ENCODE measurements at regions of chr20 and their contacts with region 1.

Region 1: DNA sequence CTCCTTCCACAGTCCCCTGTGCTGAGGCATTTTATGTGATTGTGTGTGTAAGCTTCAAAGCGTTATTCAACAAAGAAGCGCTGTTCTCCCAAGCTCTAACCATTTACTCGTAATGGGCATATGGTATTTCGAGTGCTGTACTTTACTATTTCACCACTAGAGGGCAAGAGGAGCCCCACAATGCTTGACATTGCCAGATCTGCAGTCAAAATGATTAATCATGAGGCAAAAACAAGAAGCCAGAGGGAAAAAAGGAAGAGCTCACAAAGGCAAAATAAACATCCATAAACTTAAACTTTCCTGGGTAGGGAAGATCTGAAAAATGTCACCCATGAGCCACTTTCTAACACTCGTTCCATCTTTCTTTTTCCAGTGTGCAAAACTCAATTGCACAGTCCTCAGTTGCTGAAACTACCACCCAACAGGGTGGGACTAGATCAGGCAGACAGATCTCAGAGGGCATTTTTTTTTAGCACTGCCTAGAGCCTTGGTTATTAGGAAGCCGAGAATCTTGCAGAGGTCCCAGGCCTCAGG is 215.0 kb upstream of the PLCB4 start:
- DNase-seq: peak; percentile 2
- ATAC-seq: peak; percentile 58
- H3K4me3 Mint-ChIP-seq: no peak overlapping the region
- H3K27ac Mint-ChIP-seq: no peak overlapping the region
- H3K4me1 Mint-ChIP-seq: no peaks in the 10 kb centered on the region
- H3K27me3 Mint-ChIP-seq: no peaks in the 10 kb centered on the region
- CTCF ChIP-seq: peak; percentile 80

Region 2: DNA sequence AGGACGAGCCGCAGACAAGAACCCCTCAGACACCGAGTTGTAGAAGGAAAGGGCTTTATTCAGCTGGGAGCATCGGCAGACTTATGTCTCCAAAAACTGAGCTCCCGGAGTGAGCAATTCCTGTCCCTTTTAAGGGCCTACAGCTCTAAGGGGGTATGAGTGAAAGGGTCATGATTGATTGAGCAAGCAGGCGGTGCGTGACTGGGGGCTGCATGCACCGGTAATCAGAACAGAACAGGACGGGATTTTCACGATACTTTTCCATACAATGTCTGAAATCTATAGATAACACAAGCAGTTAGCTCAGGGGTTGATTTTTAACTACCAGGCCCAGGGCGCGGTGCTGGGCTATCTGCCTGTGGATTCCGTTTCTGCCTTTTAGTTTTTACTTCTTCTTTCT is 11.3 kb before region 1 on chr20:
- CTCF ChIA-PET with region 1: interaction called, 16 read pairs
- POLR2A ChIA-PET with region 1: no interaction called
- intact Hi-C with region 1: no loop called
- DNase-seq: no peak
- ATAC-seq: no peak
- H3K4me3 Mint-ChIP-seq: no peak overlapping the region
- H3K27ac Mint-ChIP-seq: no peak overlapping the region
- H3K4me1 Mint-ChIP-seq: no peaks in the 10 kb centered on the region
- H3K27me3 Mint-ChIP-seq: no peaks in the 10 kb centered on the region
- CTCF ChIP-seq: no peak

Region 3: GRCh38 chr20:8870652-8871051 is 16.8 kb after region 1 on chr20:
- CTCF ChIA-PET with region 1: interaction called, 10 read pairs
- POLR2A ChIA-PET with region 1: no interaction called
- intact Hi-C with region 1: no loop called
- DNase-seq: no peak
- ATAC-seq: no peak
- H3K4me3 Mint-ChIP-seq: no peak overlapping the region
- H3K27ac Mint-ChIP-seq: no peak overlapping the region
- H3K4me1 Mint-ChIP-seq: no peaks in the 10 kb centered on the region
- H3K27me3 Mint-ChIP-seq: no peaks in the 10 kb centered on the region
- CTCF ChIP-seq: no peak

Region 4: DNA sequence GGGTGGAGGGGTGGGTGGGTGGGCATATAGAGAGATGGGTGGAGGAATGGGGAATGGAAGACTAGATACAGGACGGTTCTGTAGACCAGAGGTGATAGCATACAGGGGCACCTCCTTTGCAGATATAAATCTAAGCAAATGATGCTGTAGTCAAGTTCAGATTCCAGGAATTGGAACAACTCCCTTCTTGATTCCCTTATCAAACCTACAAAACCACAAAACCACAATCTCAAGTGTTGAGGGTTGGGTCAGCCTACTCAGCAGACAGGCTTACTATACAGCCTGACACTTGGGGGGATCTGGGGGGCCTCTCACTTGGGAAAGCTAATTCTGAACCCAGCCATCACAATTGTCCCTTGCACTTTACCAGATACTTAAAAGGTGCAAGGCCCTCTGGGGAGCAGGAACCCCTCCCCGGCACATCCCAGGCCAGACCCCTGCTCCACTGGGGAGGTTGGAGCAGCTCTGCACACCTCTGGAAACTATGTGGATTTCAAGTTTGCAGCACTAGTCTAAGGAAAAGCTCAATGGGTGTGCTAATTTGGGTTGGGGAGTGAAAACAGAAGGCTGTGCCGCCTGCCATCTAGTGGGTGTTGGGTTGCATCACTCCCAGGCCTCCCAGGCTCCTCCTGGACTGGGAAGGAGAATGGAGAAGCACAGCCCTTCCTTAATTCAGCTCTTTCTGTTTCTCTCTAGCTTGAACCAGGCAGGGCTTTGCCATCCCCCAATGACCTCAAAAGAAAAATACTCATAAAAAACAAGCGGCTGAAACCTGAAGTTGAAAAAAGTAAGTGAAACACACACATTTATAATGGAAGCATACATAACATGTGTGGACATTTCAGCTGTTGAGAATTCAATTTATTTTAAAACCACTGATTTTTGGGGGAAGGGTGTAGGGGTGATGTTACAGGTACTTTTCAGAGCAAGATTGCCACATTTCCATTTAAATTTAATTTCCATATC is 539.3 kb after region 1 on chr20:
- CTCF ChIA-PET with region 1: no interaction called
- POLR2A ChIA-PET with region 1: no interaction called
- intact Hi-C with region 1: loop called (anchors 10 kb)
- DNase-seq: peak; percentile 12
- ATAC-seq: no peak
- H3K4me3 Mint-ChIP-seq: no peak overlapping the region
- H3K27ac Mint-ChIP-seq: no peak overlapping the region
- H3K4me1 Mint-ChIP-seq: no peaks in the 10 kb centered on the region
- H3K27me3 Mint-ChIP-seq: no peaks in the 10 kb centered on the region
- CTCF ChIP-seq: peak; percentile 7

Measured in activated CD8-positive, alpha-beta T cell treated with anti-CD3 and anti-CD28 coated beads for 36 hours (primary cell).